Ovary (tissue), 10 donors: ENCODE measurements at regions of chr3 and their contacts with region 1.

Region 1: DNA sequence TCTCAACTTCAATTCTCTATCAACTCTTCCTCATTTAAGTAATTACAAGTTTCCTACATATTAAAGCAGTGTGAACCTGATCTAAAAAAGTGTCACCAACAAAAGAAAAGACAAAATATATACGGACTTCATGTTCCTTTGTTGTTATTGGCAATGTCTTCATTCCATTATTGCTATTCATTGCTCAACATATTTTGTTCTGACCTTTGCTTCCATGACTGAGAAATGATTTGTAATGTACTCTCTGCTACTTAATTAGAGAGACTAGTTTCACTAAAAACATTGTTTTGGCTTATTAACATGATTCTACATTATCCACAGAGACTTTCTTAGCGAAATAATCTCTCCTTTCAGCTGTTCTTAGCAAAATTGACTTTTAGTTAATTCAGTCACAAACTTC is 657.2 kb upstream of the ROBO1 start:
- DNase-seq: no peak
- H3K4me3 ChIP-seq: no peak overlapping the region
- H3K27ac ChIP-seq: no peak overlapping the region
- H3K4me1 ChIP-seq: no peaks in the 10 kb centered on the region
- H3K27me3 ChIP-seq: no peaks in the 10 kb centered on the region
- CTCF ChIP-seq: no peak
- EP300 ChIP-seq: no peak
- POLR2A ChIP-seq: no peak

Region 2: DNA sequence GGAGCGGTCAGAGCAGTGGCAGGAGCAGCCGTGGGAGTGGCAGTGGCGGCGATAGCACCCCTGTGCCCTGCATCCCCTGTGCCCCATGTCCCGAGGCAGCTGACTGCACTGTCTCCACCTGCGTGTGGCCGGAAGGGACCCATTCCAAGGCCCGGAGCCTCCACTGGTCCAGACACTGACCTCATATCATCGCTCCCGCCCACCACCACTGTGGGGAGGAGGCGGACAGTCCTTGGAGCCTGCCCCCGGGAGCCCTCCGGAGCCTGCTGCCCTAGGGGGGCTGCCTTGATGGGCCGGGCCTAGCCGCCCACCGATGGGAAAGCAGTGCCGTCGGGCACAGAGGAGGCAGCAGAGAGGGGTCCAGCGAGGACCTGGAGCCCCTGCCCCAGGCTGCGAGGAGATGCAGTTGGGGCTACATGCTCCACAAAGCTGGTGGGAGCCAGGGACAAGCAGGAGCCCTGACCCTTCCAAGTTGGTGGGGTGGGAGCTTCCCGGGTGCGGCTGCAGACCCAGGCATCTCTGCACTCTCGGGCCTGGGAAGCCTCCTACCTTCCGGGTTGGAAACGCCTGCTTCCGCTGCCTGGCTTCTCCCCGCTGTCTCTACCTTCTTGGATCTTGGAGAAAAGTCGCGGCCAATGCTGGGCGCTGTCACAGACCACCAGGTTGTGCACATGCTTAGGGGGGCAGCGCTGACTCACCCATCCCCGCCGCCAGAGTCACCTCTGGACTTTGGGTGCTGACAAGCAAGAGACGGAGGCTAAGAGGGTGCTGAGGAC is 373.9 kb before region 1 on chr3:
- intact Hi-C with region 1: no loop called
- DNase-seq: no peak
- H3K4me3 ChIP-seq: no peak overlapping the region
- H3K27ac ChIP-seq: no peak overlapping the region
- H3K4me1 ChIP-seq: no peaks in the 10 kb centered on the region
- H3K27me3 ChIP-seq: no peaks in the 10 kb centered on the region
- CTCF ChIP-seq: no peak
- EP300 ChIP-seq: no peak
- POLR2A ChIP-seq: no peak

Region 3: GRCh38 chr3:80366808-80367548 is 58.0 kb before region 1 on chr3:
- intact Hi-C with region 1: no loop called
- DNase-seq: no peak
- H3K4me3 ChIP-seq: no peak overlapping the region
- H3K27ac ChIP-seq: no peak overlapping the region
- H3K4me1 ChIP-seq: no peaks in the 10 kb centered on the region
- H3K27me3 ChIP-seq: no peaks in the 10 kb centered on the region
- CTCF ChIP-seq: no peak
- EP300 ChIP-seq: no peak
- POLR2A ChIP-seq: no peak

Region 4: DNA sequence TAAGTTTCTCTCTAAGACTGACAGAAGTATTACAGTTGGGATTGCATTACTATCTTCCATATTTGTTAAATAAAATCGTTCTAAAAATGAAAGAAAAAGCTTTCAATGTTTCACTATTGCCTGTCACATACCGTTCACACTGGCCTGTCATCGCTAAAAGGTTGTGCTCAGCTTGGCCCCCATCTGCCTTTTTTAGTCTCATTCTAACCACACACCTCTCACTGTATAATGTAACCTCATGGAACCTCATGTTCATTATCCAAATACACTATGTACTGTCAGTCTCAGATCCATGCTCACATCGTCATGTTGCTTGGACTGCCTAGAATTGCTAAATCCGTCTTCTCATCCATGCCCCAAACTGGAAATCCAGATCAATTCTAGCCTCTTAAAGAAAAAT is 19.3 kb before region 1 on chr3:
- intact Hi-C with region 1: loop called in 1 of 4 experiments (anchors 2 kb)
- DNase-seq: no peak
- H3K4me3 ChIP-seq: no peak overlapping the region
- H3K27ac ChIP-seq: no peak overlapping the region
- H3K4me1 ChIP-seq: no peaks in the 10 kb centered on the region
- H3K27me3 ChIP-seq: no peaks in the 10 kb centered on the region
- CTCF ChIP-seq: no peak
- EP300 ChIP-seq: no peak
- POLR2A ChIP-seq: no peak